CD4-positive, alpha-beta T cell (primary cell): ENCODE measurements at regions of chr15 and their contacts with region 1.

Region 1: DNA sequence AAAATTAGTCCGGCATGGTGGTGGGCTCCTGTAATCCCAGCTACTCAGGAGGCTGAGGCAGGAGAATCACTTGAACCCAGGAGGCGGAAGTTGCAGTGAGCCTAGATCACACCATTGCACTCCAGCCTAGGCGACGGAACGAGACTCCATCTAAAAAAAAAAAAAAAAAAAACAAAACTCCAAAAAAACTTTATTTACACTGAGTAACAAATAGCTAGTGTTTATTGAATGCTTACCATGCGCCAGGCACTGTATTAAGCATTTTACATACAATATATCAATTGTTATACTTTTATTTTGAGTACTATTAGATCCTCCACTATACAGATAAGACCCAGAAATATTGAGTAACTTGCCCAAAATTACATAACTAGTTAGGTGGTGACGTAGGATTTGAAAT is 17.4 kb upstream of the ARIH1 start:
- DNase-seq: no peak
- ATAC-seq: no peak
- H3K4me3 ChIP-seq: no peak overlapping the region
- H3K4me3 Mint-ChIP-seq: no peak overlapping the region
- H3K27ac ChIP-seq: no peak overlapping the region
- H3K27ac Mint-ChIP-seq: no peak overlapping the region
- H3K4me1 ChIP-seq: no peaks in the 10 kb centered on the region
- H3K4me1 Mint-ChIP-seq: peaks cover 4% of the 10 kb centered on the region
- H3K27me3 ChIP-seq: no peaks in the 10 kb centered on the region
- H3K27me3 Mint-ChIP-seq: peaks cover 4% of the 10 kb centered on the region
- CTCF ChIP-seq: no peak

Region 2: DNA sequence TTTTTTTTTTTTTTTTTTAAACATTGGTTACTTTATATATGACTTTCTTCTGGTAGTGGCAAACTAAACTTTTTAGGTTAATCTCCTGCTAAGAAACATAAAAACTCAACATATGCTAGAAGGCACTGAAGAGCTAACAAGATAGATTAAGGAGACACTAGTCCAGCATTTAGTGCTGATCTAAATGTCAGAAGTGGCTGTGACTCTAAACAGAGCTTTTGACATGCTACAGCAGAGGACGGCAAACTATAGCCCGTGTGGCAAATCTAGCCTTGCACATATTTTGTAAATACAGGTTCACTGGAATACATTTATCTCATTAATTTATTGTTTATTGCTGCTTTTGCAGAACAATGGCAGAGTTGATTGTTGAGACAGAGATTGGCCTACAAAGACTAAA is 625.7 kb before region 1 on chr15:
- CTCF ChIA-PET with region 1: no interaction called
- POLR2A ChIA-PET with region 1: no interaction called
- intact Hi-C with region 1: no loop called
- DNase-seq: no peak
- ATAC-seq: no peak
- H3K4me3 ChIP-seq: no peak overlapping the region
- H3K4me3 Mint-ChIP-seq: no peak overlapping the region
- H3K27ac ChIP-seq: no peak overlapping the region
- H3K27ac Mint-ChIP-seq: no peak overlapping the region
- H3K4me1 ChIP-seq: no peaks in the 10 kb centered on the region
- H3K4me1 Mint-ChIP-seq: no peaks in the 10 kb centered on the region
- H3K27me3 ChIP-seq: no peaks in the 10 kb centered on the region
- H3K27me3 Mint-ChIP-seq: no peaks in the 10 kb centered on the region
- CTCF ChIP-seq: no peak

Region 3: DNA sequence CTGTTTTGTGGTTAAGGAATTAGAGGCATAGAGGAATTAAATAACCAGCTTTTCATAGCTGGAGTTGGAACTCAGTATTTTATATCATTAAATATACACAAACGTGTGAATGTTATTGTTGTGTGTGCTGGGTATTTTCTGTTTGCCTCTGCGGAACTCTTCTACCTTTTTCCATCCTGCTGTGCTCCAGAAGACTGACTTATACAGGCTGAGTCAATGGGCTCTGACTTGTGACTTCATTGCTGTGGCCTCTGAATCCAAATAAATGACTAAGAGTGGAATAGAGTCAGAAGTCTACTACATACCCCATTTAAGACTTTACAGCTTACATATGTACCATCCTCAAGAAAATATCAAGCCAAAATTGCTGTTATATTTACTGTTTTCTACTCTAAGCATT is 35.1 kb after region 1 on chr15:
- CTCF ChIA-PET with region 1: interaction called, 3 read pairs
- POLR2A ChIA-PET with region 1: no interaction called
- intact Hi-C with region 1: loop called in 1 of 2 experiments (anchors 5 kb)
- DNase-seq: no peak
- ATAC-seq: no peak
- H3K4me3 ChIP-seq: no peak overlapping the region
- H3K4me3 Mint-ChIP-seq: peak overlapping the region; percentile 37
- H3K27ac ChIP-seq: no peak overlapping the region
- H3K27ac Mint-ChIP-seq: no peak overlapping the region
- H3K4me1 ChIP-seq: peaks cover 27% of the 10 kb centered on the region
- H3K4me1 Mint-ChIP-seq: peaks cover 95% of the 10 kb centered on the region
- H3K27me3 ChIP-seq: no peaks in the 10 kb centered on the region
- H3K27me3 Mint-ChIP-seq: no peaks in the 10 kb centered on the region
- CTCF ChIP-seq: no peak